K562 (cell line): ENCODE measurements at regions of chr6 and their contacts with region 1.

Region 1: DNA sequence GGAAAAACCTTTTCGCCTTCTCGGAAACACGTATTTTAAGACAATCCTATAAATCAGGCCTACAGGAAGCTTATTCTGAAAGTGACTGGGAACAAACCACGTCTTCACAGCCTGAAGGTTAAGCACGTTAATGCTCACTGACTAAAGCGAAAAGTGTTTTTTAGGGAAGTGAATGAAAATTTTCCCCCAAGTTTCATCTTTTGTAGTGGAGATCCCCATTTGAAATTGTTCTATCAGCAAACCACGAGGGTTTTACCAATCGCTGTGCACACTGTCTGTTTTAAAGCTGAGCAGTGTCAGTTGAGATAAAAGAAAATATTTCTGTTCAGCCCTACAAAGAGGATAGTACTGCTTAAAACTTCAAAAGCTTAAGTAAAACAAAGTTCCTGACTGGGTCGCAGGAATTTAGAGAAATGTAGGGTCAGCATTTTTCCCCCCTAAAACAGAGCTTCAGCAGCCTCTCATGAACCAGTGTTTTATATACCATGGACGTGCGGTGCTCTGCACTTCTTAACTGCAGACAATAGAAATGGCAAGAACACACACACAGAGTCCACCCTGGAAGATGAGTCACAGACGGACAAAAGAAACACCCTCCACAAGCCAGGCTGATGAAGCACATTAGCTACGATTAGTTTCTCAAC is 34.9 kb downstream of the SLC22A23 start:
- DNase-seq: peak; percentile 33 to 62 (median 48)
- ATAC-seq: peak; percentile 82
- H3K4me3 ChIP-seq: no peak overlapping the region
- H3K27ac ChIP-seq: no peak overlapping the region; the same call in 2 of the 3 replicates
- H3K4me1 ChIP-seq: peaks cover 11 to 43% of the 10 kb centered on the region in 2 experiments; a peak in 4 of 5 replicates
- H3K27me3 ChIP-seq: no peaks in the 10 kb centered on the region
- CTCF ChIP-seq: no peak
- EP300 ChIP-seq: 0 out of 2 replicates have a peak, but pooled peaks have one; percentile 8
- POLR2A ChIP-seq: no peak
- RAD21 ChIP-seq: no peak

Region 2: DNA sequence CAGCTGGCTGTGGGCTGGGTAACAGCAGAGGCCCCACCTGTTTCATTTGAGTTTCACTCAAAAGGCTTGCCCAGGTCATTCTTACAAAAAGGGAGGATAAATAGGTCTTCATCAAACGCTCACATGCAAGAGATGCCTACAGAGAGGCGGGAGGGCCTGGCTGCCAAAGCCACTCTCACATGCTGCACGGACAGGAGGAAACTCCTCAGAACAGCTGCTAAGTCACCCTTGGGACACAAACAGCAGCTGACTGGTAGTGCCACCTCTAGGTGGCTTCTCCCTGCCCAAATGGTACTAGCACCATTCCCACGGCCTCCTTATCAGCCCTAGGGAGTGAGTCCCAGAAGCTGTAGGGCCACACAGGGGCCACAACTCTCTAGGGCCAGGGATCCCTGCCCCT is 11.1 kb after region 1 on chr6:
- CTCF ChIA-PET with region 1: no interaction called
- POLR2A ChIA-PET with region 1: interaction called, 18 read pairs
- in situ Hi-C with region 1: no loop called
- intact Hi-C with region 1: no loop called
- DNase-seq: no peak
- ATAC-seq: no peak
- H3K4me3 ChIP-seq: no peak overlapping the region
- H3K27ac ChIP-seq: no peak overlapping the region
- H3K4me1 ChIP-seq: peaks cover 0 to under 1% of the 10 kb centered on the region in 2 experiments; a peak in 1 of 5 replicates
- H3K27me3 ChIP-seq: no peaks in the 10 kb centered on the region
- CTCF ChIP-seq: no peak
- EP300 ChIP-seq: no peak
- POLR2A ChIP-seq: no peak
- RAD21 ChIP-seq: no peak